Heart left ventricle (tissue), 16 donors: ENCODE measurements at regions of chr7 and their contacts with region 1.

Region 1: GRCh38 chr7:37448636-37449361 is at the start of gene ELMO1:
- DNase-seq: peak; percentile 79 to 91 (median 80)
- ATAC-seq: peak; percentile 59 to 90 (median 84)
- H3K4me3 ChIP-seq: peak within 1 kb of the TSS; percentile 68 to 95 (median 86)
- H3K27ac ChIP-seq: peak within 1 kb of the TSS; percentile 83 to 97 (median 93)
- H3K4me1 ChIP-seq: peaks cover 0 to 46% (median 14%) of the 10 kb centered on the region in 12 donors
- H3K27me3 ChIP-seq: peaks cover 0 to 18% (median 0%) of the 10 kb centered on the region in 9 donors
- CTCF ChIP-seq: peak in 11 of 12 donors; percentile 28 to 59 (median 47)
- POLR2A ChIP-seq: peak in 1 of 2 donors; percentile 67
- total RNA-seq, gene ELMO1: 9.8 to 38.6 (median 15.3) TPM

Region 2: DNA sequence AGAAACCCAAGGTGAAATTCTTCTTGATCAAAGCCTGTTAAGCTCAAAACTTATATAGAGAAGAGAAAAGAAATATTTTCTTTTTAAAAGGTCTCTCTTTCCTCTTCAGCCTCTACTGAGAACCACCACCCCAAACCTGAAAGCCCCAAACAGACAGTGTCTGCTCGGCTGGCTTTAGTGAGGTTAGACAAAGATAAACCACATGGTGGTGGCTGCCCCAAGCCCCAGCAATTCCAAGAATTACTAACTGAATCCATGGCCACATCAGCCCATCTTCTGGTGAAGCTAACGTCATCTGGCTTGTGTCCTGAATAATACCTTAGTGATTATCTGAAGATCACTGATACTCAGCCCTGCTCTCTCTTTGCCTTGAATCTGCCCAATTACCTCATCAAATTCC is 275.1 kb before region 1 on chr7:
- intact Hi-C with region 1: no loop called
- DNase-seq: no peak
- ATAC-seq: no peak
- H3K4me3 ChIP-seq: no peak overlapping the region
- H3K27ac ChIP-seq: no peak overlapping the region
- H3K4me1 ChIP-seq: peaks cover 0 to 3% (median 0%) of the 10 kb centered on the region in 12 donors
- H3K27me3 ChIP-seq: no peaks in the 10 kb centered on the region
- CTCF ChIP-seq: no peak
- POLR2A ChIP-seq: no peak

Region 3: GRCh38 chr7:37216156-37216852 is 232.5 kb before region 1 on chr7:
- intact Hi-C with region 1: loop called in 4 of 10 experiments (anchors 5 to 10 kb)
- DNase-seq: peak in 1 of 5 donors; percentile 29
- ATAC-seq: peak in 3 of 4 donors; percentile 69 to 82 (median 77)
- H3K4me3 ChIP-seq: no peak overlapping the region
- H3K27ac ChIP-seq: peak overlapping the region in 5 of 12 donors; percentile 4 to 40 (median 37)
- H3K4me1 ChIP-seq: peaks cover 0 to 55% (median 30%) of the 10 kb centered on the region in 12 donors
- H3K27me3 ChIP-seq: no peaks in the 10 kb centered on the region
- CTCF ChIP-seq: no peak
- POLR2A ChIP-seq: no peak

Region 4: DNA sequence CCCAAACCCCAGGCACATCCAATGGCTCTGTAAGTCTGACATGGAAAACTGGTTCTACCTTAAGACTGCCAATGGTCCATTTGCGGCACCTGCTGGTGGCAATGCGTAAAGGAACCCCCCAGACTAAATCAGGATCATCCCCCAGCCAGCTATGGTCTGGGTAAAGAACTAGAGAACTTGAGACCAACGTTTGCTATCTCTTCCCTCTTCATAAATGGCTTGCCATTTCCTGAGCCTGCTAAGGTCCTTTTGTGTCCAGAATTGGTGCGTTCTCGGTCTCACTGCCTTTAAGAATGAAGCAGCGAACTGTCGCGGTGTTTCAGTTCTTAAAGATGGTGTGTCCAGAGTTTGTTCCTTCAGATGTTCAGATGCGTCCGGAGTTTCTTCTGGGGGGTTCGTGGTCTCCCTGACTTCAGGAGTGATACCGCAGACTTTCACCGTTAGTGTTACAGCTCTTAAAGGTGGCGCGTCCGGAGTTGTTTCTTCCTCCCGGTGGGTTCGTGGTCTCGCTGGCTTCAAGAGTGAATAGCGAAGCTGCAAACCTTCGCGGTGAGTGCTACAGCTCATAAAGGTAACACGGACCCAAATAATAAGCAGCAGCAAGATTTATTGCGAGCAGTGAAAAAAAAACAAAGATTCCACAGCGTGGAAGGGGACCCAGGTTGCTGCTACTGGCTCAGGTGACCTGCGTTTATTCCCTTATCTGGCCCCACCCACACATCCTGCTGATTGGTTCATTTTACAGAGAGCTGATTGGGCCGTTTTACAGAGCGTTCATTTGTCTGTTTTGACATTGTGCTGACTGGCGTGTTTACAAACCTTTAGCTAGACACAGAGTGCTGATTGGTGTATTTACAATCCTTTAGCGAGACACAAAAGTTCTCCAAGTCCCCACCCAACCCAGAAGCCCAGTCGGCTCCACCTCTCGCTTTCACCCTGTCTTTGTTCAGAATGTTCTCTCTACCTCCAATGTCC is 95.5 kb before region 1 on chr7:
- intact Hi-C with region 1: loop called in 7 of 10 experiments (anchors 1 to 10 kb)
- DNase-seq: peak in 3 of 5 donors; percentile 21 to 42 (median 34)
- ATAC-seq: peak in 2 of 4 donors; percentile 4 to 5
- H3K4me3 ChIP-seq: peak overlapping the region in 4 of 12 donors; percentile 1 to 53 (median 13)
- H3K27ac ChIP-seq: peak overlapping the region in 11 of 12 donors; percentile 45 to 87 (median 77)
- H3K4me1 ChIP-seq: peaks cover 6 to 81% (median 44%) of the 10 kb centered on the region in 12 donors
- H3K27me3 ChIP-seq: no peaks in the 10 kb centered on the region
- CTCF ChIP-seq: peak in 4 of 12 donors; percentile 21 to 42 (median 22)
- POLR2A ChIP-seq: no peak

Region 5: GRCh38 chr7:37391791-37392672 is 56.8 kb before region 1 on chr7:
- intact Hi-C with region 1: loop called in 3 of 10 experiments (anchors 2 to 10 kb)
- DNase-seq: no peak
- ATAC-seq: peak; percentile 44 to 75 (median 64)
- H3K4me3 ChIP-seq: no peak overlapping the region
- H3K27ac ChIP-seq: peak overlapping the region in 11 of 12 donors; percentile 2 to 79 (median 30)
- H3K4me1 ChIP-seq: peaks cover 0 to 63% (median 15%) of the 10 kb centered on the region in 12 donors
- H3K27me3 ChIP-seq: no peaks in the 10 kb centered on the region
- CTCF ChIP-seq: no peak
- POLR2A ChIP-seq: no peak